ENCODE measurements at regions of chr14 and their contacts with region 1.

Region 1: DNA sequence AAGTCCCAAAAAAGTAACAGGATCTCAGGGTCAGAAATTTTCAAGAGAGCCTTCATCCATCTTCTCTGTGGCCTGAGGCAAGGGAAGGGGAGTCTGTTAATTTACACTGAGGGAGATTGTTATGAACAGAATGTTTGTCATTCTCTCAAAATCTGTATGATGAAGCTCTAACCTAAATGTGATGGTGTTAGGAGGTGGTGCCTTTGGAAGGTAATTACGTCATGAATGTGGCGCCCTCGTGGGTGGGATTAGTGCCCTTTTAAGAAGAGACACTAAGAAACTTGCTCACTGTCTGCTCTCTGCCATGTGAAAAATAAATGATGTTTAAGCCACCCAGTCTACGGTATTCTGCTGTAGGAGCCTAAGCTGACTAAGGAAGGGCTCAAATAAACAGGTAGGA is 521.6 kb downstream of the SNAPC1 start:
- DNase-seq: no peak
- ATAC-seq: no peak
- H3K4me3 ChIP-seq: no peak overlapping the region
- H3K27ac ChIP-seq: no peak overlapping the region
- H3K4me1 ChIP-seq: no peaks in the 10 kb centered on the region
- H3K27me3 ChIP-seq: no peaks in the 10 kb centered on the region
- CTCF ChIP-seq: no peak
- POLR2A ChIP-seq: no peak

Region 2: DNA sequence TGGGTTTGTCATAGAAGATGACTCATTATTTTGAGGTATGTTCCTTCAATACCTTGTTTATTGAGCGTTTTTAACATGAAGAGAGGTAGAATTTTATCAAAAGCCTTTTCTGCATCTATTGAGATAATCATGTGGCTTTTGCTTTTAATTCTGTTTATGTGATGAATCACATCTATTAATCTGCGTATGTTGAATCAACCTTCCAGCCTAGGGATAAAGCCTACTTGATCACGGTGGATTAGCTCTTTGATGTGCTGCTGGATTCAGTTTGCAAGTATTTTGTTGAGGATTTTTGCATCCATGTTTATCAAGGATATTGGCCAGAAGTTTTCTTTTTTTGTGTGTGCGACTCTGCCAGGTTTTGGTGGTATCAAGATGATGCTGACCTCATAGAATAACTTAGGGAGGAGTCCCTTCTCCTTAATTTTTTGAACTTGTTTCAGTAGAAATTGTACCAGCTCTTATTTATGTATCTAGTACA is 81.0 kb after region 1 on chr14:
- in situ Hi-C with region 1: no loop called
- intact Hi-C with region 1: loop called (anchors 2 kb)
- DNase-seq: no peak
- ATAC-seq: no peak
- H3K4me3 ChIP-seq: no peak overlapping the region
- H3K27ac ChIP-seq: no peak overlapping the region
- H3K4me1 ChIP-seq: no peaks in the 10 kb centered on the region
- H3K27me3 ChIP-seq: no peaks in the 10 kb centered on the region
- CTCF ChIP-seq: no peak
- POLR2A ChIP-seq: no peak

Measured in gastrocnemius medialis (tissue), 4 donors.